Naive thymus-derived CD4-positive, alpha-beta T cell (primary cell): ENCODE measurements at regions of chr4 and their contacts with region 1.

Region 1: GRCh38 chr4:109977854-109978501 is 65.3 kb downstream of the EGF start:
- DNase-seq: peak in 5 of 9 donors; percentile 5 to 34 (median 10)
- ATAC-seq: peak; percentile 45
- H3K4me3 ChIP-seq: no peak overlapping the region
- H3K4me3 Mint-ChIP-seq: no peak overlapping the region
- H3K27ac ChIP-seq: no peak overlapping the region
- H3K27ac Mint-ChIP-seq: no peak overlapping the region
- H3K4me1 ChIP-seq: no peaks in the 10 kb centered on the region
- H3K4me1 Mint-ChIP-seq: peaks cover 0 to 5% (median 0%) of the 10 kb centered on the region in 7 donors
- H3K27me3 ChIP-seq: no peaks in the 10 kb centered on the region
- H3K27me3 Mint-ChIP-seq: peaks cover 9 to 57% (median 28%) of the 10 kb centered on the region in 5 donors

Region 2: DNA sequence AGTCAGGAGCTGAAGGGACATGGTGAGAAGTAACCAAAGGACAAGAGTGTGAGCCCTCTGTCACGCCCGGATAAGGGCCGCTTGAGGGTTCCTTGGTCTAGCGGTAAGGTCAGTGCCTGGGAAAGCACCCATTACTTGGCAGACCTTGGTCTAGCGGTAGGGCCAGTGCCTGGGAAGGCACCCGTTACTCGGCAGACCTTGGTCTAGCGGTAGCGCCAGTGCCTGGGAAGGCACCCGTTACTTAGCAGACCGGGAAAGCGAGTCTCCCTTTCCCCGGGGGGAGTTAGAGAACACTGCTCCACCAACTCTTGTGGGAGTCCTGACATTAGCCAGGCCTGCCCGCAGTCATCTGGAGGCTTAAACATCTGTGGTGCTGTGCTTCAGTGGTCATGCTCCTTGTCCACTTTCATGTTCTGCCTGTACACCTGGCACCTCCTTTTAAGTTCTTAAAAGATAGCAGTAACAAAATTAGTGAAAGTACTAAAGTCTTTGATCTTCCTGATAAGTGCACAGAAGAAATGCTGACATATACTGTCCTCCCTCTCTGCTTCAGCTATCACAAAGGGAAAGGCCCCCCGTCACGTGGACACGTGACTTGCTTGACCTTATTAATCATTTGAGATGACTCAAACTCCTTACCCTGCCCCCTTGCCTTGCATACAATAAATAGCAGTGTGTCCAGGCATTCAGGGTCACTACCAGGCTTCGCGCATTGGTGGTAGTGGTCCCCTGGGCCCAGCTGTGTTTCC is 553.7 kb before region 1 on chr4:
- CTCF ChIA-PET with region 1: interaction called, 6 read pairs
- POLR2A ChIA-PET with region 1: no interaction called
- intact Hi-C with region 1: loop called (anchors 1 kb)
- DNase-seq: no peak
- ATAC-seq: no peak
- H3K4me3 ChIP-seq: no peak overlapping the region
- H3K4me3 Mint-ChIP-seq: no peak overlapping the region
- H3K27ac ChIP-seq: no peak overlapping the region
- H3K27ac Mint-ChIP-seq: no peak overlapping the region
- H3K4me1 ChIP-seq: no peaks in the 10 kb centered on the region
- H3K4me1 Mint-ChIP-seq: peaks cover 4 to 7% (median 5%) of the 10 kb centered on the region in 7 donors
- H3K27me3 ChIP-seq: no peaks in the 10 kb centered on the region
- H3K27me3 Mint-ChIP-seq: peaks cover 0 to 10% (median 0%) of the 10 kb centered on the region in 5 donors

Region 3: GRCh38 chr4:109665783-109666485 is 312.0 kb before region 1 on chr4:
- CTCF ChIA-PET with region 1: no interaction called
- POLR2A ChIA-PET with region 1: no interaction called
- intact Hi-C with region 1: loop called in 1 of 2 experiments (anchors 10 kb)
- DNase-seq: no peak
- ATAC-seq: no peak
- H3K4me3 ChIP-seq: no peak overlapping the region
- H3K4me3 Mint-ChIP-seq: peak overlapping the region in 7 of 10 donors; percentile 12 to 54 (median 45)
- H3K27ac ChIP-seq: no peak overlapping the region
- H3K27ac Mint-ChIP-seq: peak overlapping the region in 6 of 9 donors; percentile 16 to 82 (median 70)
- H3K4me1 ChIP-seq: peaks cover 0 to 39% of the 10 kb centered on the region in 2 donors
- H3K4me1 Mint-ChIP-seq: peaks cover 31 to 88% (median 72%) of the 10 kb centered on the region in 7 donors
- H3K27me3 ChIP-seq: no peaks in the 10 kb centered on the region
- H3K27me3 Mint-ChIP-seq: no peaks in the 10 kb centered on the region

Region 4: DNA sequence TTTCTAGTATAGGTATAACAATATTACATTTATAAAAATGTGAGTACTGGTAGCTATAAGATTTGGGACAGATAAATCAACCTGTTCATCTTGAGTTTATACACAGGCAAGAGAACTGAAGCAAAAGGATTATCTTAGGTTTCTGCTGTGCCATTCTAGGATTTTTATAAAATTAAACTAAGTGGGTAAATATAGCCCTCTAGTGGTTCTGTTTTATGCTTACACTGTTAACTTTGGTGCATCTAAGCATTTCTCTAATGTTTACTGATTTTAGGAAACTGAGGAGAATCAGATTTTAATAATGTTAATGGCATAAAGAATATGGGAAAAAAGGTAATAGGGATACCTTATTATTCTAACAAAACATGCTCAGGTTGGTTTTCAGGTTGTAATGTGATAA is 151.3 kb before region 1 on chr4:
- CTCF ChIA-PET with region 1: no interaction called
- POLR2A ChIA-PET with region 1: no interaction called
- intact Hi-C with region 1: loop called (anchors 5 to 10 kb)
- DNase-seq: peak in 6 of 9 donors; percentile 14 to 46 (median 27)
- ATAC-seq: peak; percentile 73
- H3K4me3 ChIP-seq: no peak overlapping the region
- H3K4me3 Mint-ChIP-seq: no peak overlapping the region
- H3K27ac ChIP-seq: no peak overlapping the region
- H3K27ac Mint-ChIP-seq: no peak overlapping the region
- H3K4me1 ChIP-seq: no peaks in the 10 kb centered on the region
- H3K4me1 Mint-ChIP-seq: peaks cover 0 to 3% (median 0%) of the 10 kb centered on the region in 7 donors
- H3K27me3 ChIP-seq: no peaks in the 10 kb centered on the region
- H3K27me3 Mint-ChIP-seq: no peaks in the 10 kb centered on the region

Region 5: DNA sequence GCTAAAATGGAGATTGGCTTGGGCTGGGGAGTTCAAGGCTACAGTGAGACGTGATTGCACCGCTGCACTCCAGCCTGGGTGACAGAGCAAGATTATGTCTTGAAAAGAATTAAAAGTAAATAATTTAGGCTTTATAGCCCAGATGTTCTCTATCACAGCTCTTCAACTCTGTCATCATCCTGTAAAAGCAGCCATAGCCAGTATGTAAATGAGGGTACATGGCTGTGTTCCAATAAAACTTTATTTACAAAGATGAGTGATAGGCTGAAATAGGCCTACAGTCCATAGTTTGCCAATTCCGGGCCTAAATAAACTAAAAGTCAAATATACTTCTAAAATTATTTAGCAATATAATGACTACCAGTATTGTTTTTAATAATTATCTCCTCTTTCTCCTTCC is 141.0 kb before region 1 on chr4:
- CTCF ChIA-PET with region 1: no interaction called
- POLR2A ChIA-PET with region 1: no interaction called
- intact Hi-C with region 1: loop called in 1 of 2 experiments (anchors 10 kb)
- DNase-seq: no peak
- ATAC-seq: no peak
- H3K4me3 ChIP-seq: no peak overlapping the region
- H3K4me3 Mint-ChIP-seq: no peak overlapping the region
- H3K27ac ChIP-seq: no peak overlapping the region
- H3K27ac Mint-ChIP-seq: no peak overlapping the region
- H3K4me1 ChIP-seq: no peaks in the 10 kb centered on the region
- H3K4me1 Mint-ChIP-seq: peaks cover 0 to 4% (median 0%) of the 10 kb centered on the region in 7 donors
- H3K27me3 ChIP-seq: no peaks in the 10 kb centered on the region
- H3K27me3 Mint-ChIP-seq: peaks cover 0 to 3% (median 0%) of the 10 kb centered on the region in 5 donors

Region 6: DNA sequence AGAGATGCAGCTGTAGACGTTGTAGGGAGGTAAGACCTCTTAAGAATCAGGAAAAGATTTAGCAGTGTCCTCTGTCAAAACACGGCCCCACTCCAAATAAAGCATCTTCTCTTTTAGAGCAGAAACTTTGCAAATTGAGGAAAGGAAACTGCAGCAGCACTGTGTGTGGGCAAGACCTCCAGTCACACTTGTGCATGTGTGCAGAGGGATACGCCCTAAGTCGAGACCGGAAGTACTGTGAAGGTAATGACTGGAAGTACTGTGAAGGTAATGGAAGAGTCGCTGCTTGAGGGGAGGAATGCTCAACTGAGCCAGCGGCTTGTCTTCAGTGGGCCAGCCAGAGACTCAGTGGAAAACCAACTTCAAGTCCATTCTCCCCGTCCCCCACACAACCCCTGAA is 18.8 kb before region 1 on chr4:
- CTCF ChIA-PET with region 1: no interaction called
- POLR2A ChIA-PET with region 1: no interaction called
- intact Hi-C with region 1: no loop called
- DNase-seq: no peak
- ATAC-seq: no peak
- H3K4me3 ChIP-seq: no peak overlapping the region
- H3K4me3 Mint-ChIP-seq: peak overlapping the region in 1 of 10 donors; percentile 58
- H3K27ac ChIP-seq: no peak overlapping the region
- H3K27ac Mint-ChIP-seq: no peak overlapping the region
- H3K4me1 ChIP-seq: no peaks in the 10 kb centered on the region
- H3K4me1 Mint-ChIP-seq: no peaks in the 10 kb centered on the region
- H3K27me3 ChIP-seq: no peaks in the 10 kb centered on the region
- H3K27me3 Mint-ChIP-seq: peaks cover 5 to 31% (median 11%) of the 10 kb centered on the region in 5 donors